ENCODE measurements at regions of chr19 and their contacts with region 1.

Region 1: GRCh38 chr19:41563854-41564514 is 12.0 kb upstream of the CEACAM21 start:
- DNase-seq: no peak
- ATAC-seq: no peak; the same call in 1 of the 2 replicates
- H3K4me3 ChIP-seq: no peak overlapping the region
- H3K27ac ChIP-seq: no peak overlapping the region
- H3K4me1 ChIP-seq: peaks cover 2 to 7% of the 10 kb centered on the region in 2 experiments; a peak in 1 of 4 replicates
- H3K27me3 ChIP-seq: peaks cover 44% of the 10 kb centered on the region
- CTCF ChIP-seq: no peak
- POLR2A ChIP-seq: no peak
- RAD21 ChIP-seq: no peak

Region 2: GRCh38 chr19:41553804-41554203 is 10.2 kb before region 1 on chr19:
- CTCF ChIA-PET with region 1: interaction called, 10 read pairs
- POLR2A ChIA-PET with region 1: interaction called, 3 read pairs
- RAD21 ChIA-PET with region 1: no interaction called
- intact Hi-C with region 1: no loop called
- DNase-seq: no peak
- ATAC-seq: no peak
- H3K4me3 ChIP-seq: no peak overlapping the region
- H3K27ac ChIP-seq: no peak overlapping the region
- H3K4me1 ChIP-seq: no peaks in the 10 kb centered on the region
- H3K27me3 ChIP-seq: peaks cover 64% of the 10 kb centered on the region
- CTCF ChIP-seq: no peak
- POLR2A ChIP-seq: no peak
- RAD21 ChIP-seq: no peak

Region 3: GRCh38 chr19:41595258-41595889 is 31.4 kb after region 1 on chr19:
- CTCF ChIA-PET with region 1: no interaction called
- POLR2A ChIA-PET with region 1: no interaction called
- RAD21 ChIA-PET with region 1: no interaction called
- intact Hi-C with region 1: no loop called
- DNase-seq: peak; percentile 74
- ATAC-seq: peak; percentile 75
- H3K4me3 ChIP-seq: no peak overlapping the region
- H3K27ac ChIP-seq: no peak overlapping the region
- H3K4me1 ChIP-seq: no peaks in the 10 kb centered on the region
- H3K27me3 ChIP-seq: peaks cover 16% of the 10 kb centered on the region; the same call in 1 of the 2 replicates
- CTCF ChIP-seq: peak; percentile 61 to 83 (median 78); a peak in 5 of 6 replicates
- POLR2A ChIP-seq: no peak
- RAD21 ChIP-seq: peak; percentile 67